ENCODE measurements at regions of chr17 and their contacts with region 1.

Region 1: DNA sequence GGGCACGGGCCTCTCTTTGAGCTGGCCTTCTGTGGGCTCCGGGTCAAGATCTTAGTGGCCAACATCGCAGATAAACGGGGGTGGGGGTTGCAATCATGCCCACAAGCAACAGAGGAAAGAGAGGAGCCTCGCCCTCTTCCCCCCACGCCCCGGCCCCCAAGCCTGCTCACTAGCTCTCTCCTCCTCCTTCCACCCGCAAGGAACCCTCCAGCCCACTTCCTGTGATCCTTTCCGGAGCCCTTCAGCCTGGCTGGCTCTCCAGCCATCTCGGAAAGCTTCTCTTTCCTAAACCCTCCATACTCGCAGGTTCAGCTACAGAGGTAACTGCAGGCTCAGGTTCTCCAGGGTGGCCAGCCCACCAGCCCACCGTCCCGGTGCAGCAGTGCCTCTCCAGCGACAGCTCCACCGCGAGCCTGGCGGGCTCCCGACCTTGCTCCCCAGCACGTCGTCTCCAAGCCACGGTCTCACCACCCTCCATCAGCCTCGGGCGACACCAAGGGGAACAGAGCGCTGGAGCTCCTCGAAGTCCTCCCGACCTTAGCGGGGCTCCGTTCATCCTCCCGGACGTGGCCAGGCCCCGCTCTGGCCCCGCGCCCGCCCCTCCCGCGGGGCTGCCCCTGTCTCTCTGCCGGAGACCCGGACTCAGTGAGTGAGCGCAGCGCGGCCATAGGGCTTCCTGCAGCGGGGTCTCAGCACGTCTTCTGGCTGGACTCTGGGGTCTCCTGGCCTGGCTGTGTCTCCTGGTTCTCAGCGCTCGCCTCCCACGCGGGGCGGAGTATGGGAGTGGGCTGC is 12.9 kb upstream of the ODF4 start:
- DNase-seq: no peak
- H3K4me3 ChIP-seq: no peak overlapping the region
- H3K27ac ChIP-seq: no peak overlapping the region
- H3K4me1 ChIP-seq: no peaks in the 10 kb centered on the region
- H3K27me3 ChIP-seq: no peaks in the 10 kb centered on the region
- CTCF ChIP-seq: no peak

Region 2: GRCh38 chr17:7729816-7730215 is 596.9 kb before region 1 on chr17:
- CTCF ChIA-PET with region 1: no interaction called
- POLR2A ChIA-PET with region 1: interaction called, 49 read pairs
- intact Hi-C with region 1: no loop called
- DNase-seq: no peak
- H3K4me3 ChIP-seq: no peak overlapping the region
- H3K27ac ChIP-seq: no peak overlapping the region
- H3K4me1 ChIP-seq: no peaks in the 10 kb centered on the region
- H3K27me3 ChIP-seq: no peaks in the 10 kb centered on the region
- CTCF ChIP-seq: no peak

Region 3: DNA sequence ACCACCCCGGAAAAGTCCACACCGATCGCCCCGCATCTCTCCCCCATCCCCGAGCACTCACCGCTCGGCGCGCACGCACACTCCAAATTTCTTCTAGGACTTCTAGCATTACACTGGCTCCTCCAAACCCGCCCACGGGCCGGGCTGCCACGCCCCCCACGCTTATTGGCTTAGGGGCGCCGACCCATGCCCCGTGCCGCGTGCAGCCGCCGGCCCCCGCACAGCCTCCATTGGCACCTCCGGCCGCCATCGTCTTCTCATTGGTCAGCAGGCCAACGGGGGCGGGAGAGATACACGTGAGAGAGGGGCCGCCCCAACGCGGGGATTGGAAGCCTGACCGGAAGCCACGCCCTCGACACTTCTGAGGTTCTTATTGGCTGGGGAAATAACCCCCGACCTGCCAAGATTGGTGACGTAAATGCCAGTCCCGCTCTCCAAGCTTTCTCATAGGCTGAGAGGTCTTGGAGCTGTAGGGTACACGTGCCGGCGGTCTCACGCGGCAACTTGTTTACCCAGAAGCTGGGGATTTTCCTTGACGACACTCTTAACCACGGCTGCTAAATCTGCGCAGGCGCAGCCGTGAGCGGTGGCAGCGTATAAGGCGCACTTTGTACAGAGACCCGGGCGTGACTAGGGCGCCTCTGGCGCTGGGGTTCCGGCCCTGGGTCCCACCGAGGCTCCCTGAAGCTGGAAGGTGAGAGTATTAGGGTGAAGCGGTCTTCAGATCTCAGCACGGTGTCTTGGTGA is 170.3 kb before region 1 on chr17:
- CTCF ChIA-PET with region 1: no interaction called
- POLR2A ChIA-PET with region 1: no interaction called
- intact Hi-C with region 1: no loop called
- DNase-seq: peak; percentile 99 to 100
- H3K4me3 ChIP-seq: peak overlapping the region; percentile 60
- H3K27ac ChIP-seq: peak overlapping the region; percentile 82
- H3K4me1 ChIP-seq: peaks cover 25% of the 10 kb centered on the region
- H3K27me3 ChIP-seq: no peaks in the 10 kb centered on the region
- CTCF ChIP-seq: no peak

Region 4: DNA sequence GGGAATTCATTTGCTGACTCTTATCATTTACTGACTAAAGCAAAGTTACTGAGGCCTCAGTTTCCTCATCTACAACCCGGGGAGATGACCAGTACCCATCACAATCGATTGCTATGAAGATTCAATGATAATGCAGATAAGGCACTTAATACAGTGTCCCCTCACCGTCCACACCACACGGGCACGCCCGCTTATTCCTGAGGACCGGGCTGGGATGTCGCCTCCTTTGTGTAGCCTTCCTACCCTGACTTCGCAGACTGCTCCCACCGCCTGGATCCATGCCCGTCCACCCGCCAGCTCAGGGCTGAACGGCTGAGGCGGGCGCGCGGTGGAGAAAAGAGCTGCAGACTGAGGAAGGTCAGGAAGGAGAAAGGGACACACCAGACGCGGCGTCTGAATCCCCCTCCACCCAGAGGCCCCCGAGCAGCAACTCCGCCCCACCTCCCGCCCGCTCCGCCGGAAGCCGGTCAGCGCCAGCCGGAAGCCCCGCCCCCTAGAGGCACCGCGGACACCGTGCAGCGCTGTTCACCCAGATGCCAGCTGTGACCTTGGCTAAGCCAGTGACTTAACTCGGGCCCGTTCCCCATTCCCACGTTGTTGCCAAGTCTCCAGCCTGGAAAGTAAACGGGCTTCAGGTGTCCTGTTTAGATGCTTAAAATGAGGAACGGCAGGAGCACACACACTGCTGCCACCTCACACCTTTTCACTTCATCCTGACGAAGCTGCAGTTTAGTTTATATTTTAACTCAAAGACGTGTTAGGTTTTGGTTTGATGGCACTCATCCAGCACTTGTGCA is 49.8 kb after region 1 on chr17 and contains the start of gene KRABD2:
- CTCF ChIA-PET with region 1: no interaction called
- POLR2A ChIA-PET with region 1: interaction called, 25 read pairs
- intact Hi-C with region 1: no loop called
- DNase-seq: peak; percentile 40 to 94
- H3K4me3 ChIP-seq: no peak within 1 kb of the TSS
- H3K27ac ChIP-seq: no peak within 1 kb of the TSS
- H3K4me1 ChIP-seq: peaks cover 19% of the 10 kb centered on the region
- H3K27me3 ChIP-seq: no peaks in the 10 kb centered on the region
- CTCF ChIP-seq: peak; percentile 41; the same call in 1 of the 2 replicates

Measured in PC-9 (cell line).